Left ventricle myocardium inferior (tissue), 1 donor: ENCODE measurements at regions of chr13 and their contacts with region 1.

Region 1: DNA sequence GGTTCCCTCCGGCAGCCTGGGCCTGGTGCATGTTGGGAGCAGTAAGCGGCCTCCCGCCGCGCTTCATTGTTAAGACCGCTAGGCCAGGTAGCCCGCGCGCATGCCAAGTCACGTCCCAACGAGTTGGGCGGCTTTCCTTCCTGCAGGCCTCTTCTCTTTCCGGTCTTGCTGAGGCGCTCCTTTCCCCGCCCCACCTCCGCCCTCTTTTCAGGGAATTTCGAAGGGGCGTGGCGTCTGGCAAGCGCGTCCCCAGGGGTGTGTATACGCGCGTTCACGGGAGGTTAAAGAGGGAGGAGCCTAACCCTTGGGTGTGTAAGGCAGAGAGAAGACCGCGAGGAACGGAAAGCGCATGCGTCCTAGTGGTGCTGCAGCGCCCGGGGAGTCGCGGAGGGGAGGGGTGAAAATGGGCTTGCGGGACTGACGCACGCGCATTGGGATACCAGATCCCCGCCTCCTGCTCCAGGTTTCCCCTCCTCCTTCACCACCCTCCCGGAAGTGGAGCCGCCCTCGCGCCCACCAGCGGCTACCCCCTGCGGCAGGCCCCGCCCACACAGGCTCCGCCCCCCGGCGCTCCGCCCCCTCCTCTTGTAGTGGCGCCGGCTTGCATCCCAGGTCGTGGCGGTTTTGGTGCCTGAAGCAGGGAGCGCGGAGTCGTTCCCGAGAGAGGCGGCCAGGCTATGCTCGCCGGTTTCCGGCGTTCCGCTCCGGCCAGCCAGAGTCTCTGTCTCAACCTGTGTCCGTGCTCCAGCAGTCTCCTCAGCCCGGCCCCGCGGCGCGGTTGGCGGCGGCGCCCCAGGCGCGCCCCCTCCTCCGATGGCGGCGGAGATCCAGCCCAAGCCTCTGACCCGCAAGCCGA is at the start of gene WDFY2:
- DNase-seq: peak; percentile 99
- H3K4me3 ChIP-seq: peak within 1 kb of the TSS; percentile 94
- H3K27ac ChIP-seq: peak within 1 kb of the TSS; percentile 94
- H3K4me1 ChIP-seq: peaks cover 45% of the 10 kb centered on the region
- H3K27me3 ChIP-seq: no peaks in the 10 kb centered on the region
- CTCF ChIP-seq: peak; percentile 7
- total RNA-seq, gene WDFY2: 4.5 TPM

Region 2: GRCh38 chr13:51380269-51380668 is 203.8 kb before region 1 on chr13:
- intact Hi-C with region 1: no loop called
- DNase-seq: no peak
- H3K4me3 ChIP-seq: no peak overlapping the region
- H3K27ac ChIP-seq: no peak overlapping the region
- H3K4me1 ChIP-seq: peaks cover 4% of the 10 kb centered on the region
- H3K27me3 ChIP-seq: no peaks in the 10 kb centered on the region
- CTCF ChIP-seq: no peak

Region 3: GRCh38 chr13:51465124-51465523 is 119.0 kb before region 1 on chr13:
- intact Hi-C with region 1: loop called (anchors 5 kb)
- DNase-seq: no peak
- H3K4me3 ChIP-seq: no peak overlapping the region
- H3K27ac ChIP-seq: no peak overlapping the region
- H3K4me1 ChIP-seq: no peaks in the 10 kb centered on the region
- H3K27me3 ChIP-seq: no peaks in the 10 kb centered on the region
- CTCF ChIP-seq: no peak